ENCODE measurements at regions of chr2 and their contacts with region 1.

Region 1: GRCh38 chr2:44044281-44044720 is 48.5 kb upstream of the LRPPRC start:
- DNase-seq: peak; percentile 74 to 84
- ATAC-seq: peak; percentile 96 to 99
- H3K4me3 ChIP-seq: peak overlapping the region in 1 of 4 donors; percentile 17
- H3K27ac ChIP-seq: peak overlapping the region; percentile 44 to 58 (median 48)
- H3K4me1 ChIP-seq: peaks cover 3 to 4% of the 10 kb centered on the region in 2 donors
- H3K27me3 ChIP-seq: no peaks in the 10 kb centered on the region
- CTCF ChIP-seq: peak; percentile 74 to 93 (median 90)
- POLR2A ChIP-seq: no peak

Region 2: GRCh38 chr2:43707255-43708015 is 336.9 kb before region 1 on chr2:
- in situ Hi-C with region 1: no loop called
- intact Hi-C with region 1: no loop called
- DNase-seq: peak; percentile 13 to 46
- ATAC-seq: peak; percentile 39 to 62
- H3K4me3 ChIP-seq: no peak overlapping the region
- H3K27ac ChIP-seq: no peak overlapping the region
- H3K4me1 ChIP-seq: no peaks in the 10 kb centered on the region
- H3K27me3 ChIP-seq: no peaks in the 10 kb centered on the region
- CTCF ChIP-seq: no peak
- POLR2A ChIP-seq: no peak

Region 3: DNA sequence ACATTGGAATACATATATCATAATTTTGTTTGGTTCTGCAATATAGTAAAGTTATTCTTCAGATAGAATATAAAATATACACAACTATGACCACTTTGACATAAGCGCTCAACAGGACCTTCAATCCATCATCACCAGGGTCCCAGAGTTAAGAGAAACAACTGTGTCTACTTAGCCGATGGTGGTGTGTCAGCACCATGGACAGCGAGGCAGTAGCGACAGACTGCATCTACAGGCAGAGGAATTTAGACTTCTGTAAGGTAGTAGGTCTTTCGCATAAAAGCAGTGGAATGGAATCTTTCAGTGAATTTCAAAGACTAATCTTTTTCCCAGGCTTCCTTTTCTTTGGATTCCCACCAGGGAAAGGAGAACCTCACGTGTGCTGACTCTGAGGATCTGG is 28.0 kb before region 1 on chr2:
- in situ Hi-C with region 1: no loop called
- intact Hi-C with region 1: no loop called
- DNase-seq: no peak
- ATAC-seq: no peak
- H3K4me3 ChIP-seq: no peak overlapping the region
- H3K27ac ChIP-seq: no peak overlapping the region
- H3K4me1 ChIP-seq: no peaks in the 10 kb centered on the region
- H3K27me3 ChIP-seq: peaks cover 0 to 4% (median 0%) of the 10 kb centered on the region in 3 donors
- CTCF ChIP-seq: no peak
- POLR2A ChIP-seq: no peak

Region 4: DNA sequence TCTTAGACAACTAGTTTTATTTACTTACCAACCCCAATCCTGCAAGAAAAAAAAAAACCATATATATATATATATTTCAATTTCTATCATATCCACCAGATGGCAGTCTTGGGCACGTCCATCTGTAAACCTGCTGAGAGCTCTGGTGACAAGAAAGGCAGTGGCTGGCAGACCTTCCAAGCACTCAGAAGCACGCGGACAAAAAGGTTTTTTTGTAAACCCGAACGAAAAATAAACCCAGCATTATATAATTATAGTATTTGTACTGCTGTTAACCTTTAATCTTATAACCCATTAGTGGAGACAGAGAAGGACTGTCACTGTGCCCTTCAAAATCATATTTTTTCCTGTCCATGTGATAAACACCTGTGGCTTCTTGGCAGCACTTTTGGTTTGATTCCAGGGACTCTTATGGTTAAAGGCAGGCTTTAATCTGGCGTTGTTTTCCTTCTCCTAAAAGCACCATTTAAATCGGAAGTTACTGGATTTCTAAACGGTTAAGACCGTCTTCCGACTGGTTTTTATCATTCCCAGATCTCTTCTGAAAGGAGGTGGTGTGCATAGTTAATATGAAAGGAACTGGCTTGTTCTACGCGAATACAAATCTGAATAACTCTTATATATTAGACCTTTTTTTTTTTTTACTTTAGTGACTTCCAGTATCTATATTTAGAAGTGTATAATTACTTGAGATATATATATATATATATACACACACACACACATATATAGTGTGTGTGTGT is 200.0 kb after region 1 on chr2:
- in situ Hi-C with region 1: no loop called
- intact Hi-C with region 1: loop called (anchors 2 kb)
- DNase-seq: peak; percentile 57 to 65
- ATAC-seq: peak; percentile 77 to 89
- H3K4me3 ChIP-seq: peak overlapping the region; percentile 16 to 48 (median 40)
- H3K27ac ChIP-seq: peak overlapping the region; percentile 36 to 83 (median 72)
- H3K4me1 ChIP-seq: peaks cover 12% of the 10 kb centered on the region in 2 donors
- H3K27me3 ChIP-seq: no peaks in the 10 kb centered on the region
- CTCF ChIP-seq: peak; percentile 43 to 76 (median 63)
- POLR2A ChIP-seq: no peak

Region 5: GRCh38 chr2:44342854-44343253 is 298.6 kb after region 1 on chr2:
- in situ Hi-C with region 1: no loop called
- intact Hi-C with region 1: loop called (anchors 5 kb)
- DNase-seq: no peak
- ATAC-seq: peak in 1 of 2 donors; percentile 44
- H3K4me3 ChIP-seq: no peak overlapping the region
- H3K27ac ChIP-seq: no peak overlapping the region
- H3K4me1 ChIP-seq: peaks cover 4 to 7% of the 10 kb centered on the region in 2 donors
- H3K27me3 ChIP-seq: no peaks in the 10 kb centered on the region
- CTCF ChIP-seq: peak in 3 of 5 experiments; percentile 20 to 29 (median 27)
- POLR2A ChIP-seq: no peak

Region 6: DNA sequence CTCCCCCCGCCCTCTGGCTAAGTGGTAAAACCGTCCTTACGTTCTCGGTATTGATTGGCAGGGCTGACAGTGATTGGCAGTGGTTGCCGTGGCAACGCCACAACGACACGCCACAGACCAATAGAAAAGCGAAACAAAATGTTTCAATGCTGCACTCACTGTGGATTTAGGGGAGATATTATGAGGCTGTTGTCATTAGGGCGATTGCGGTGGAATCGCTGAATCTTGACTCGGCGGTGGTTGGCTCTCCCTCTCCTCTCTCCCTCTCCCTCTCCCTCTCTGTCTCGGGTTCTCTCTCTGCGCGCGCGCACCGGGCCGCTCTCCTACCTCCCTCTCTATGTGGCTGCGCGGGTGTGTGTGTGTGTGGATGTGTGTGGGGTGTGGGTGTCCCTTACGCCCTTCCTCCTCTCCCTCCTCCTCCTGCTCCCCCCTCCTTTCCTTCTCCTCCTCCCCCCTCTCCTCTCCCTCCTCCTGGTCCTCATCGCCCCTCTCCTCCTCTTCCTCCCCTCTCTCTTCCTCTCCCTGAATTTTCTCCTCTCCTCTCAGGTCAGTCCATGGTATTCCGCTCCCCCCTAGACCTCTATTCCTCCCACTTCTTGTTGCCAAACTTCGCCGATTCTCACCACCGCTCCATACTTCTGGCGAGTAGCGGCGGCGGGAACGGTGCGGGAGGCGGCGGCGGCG is 897.4 kb after region 1 on chr2 and contains the start of gene SIX3:
- in situ Hi-C with region 1: loop called in 1 of 4 experiments (anchors 25 kb)
- intact Hi-C with region 1: no loop called
- DNase-seq: no peak
- ATAC-seq: no peak
- H3K4me3 ChIP-seq: peak within 1 kb of the TSS; percentile 39 to 57 (median 48)
- H3K27ac ChIP-seq: no peak within 1 kb of the TSS
- H3K4me1 ChIP-seq: peaks cover 8 to 19% of the 10 kb centered on the region in 2 donors
- H3K27me3 ChIP-seq: peaks cover 84 to 92% (median 89%) of the 10 kb centered on the region in 3 donors
- CTCF ChIP-seq: no peak
- POLR2A ChIP-seq: no peak
- total RNA-seq, gene SIX3: not detected